WTC11 (cell line): ENCODE measurements at regions of chr11 and their contacts with region 1.

Region 1: DNA sequence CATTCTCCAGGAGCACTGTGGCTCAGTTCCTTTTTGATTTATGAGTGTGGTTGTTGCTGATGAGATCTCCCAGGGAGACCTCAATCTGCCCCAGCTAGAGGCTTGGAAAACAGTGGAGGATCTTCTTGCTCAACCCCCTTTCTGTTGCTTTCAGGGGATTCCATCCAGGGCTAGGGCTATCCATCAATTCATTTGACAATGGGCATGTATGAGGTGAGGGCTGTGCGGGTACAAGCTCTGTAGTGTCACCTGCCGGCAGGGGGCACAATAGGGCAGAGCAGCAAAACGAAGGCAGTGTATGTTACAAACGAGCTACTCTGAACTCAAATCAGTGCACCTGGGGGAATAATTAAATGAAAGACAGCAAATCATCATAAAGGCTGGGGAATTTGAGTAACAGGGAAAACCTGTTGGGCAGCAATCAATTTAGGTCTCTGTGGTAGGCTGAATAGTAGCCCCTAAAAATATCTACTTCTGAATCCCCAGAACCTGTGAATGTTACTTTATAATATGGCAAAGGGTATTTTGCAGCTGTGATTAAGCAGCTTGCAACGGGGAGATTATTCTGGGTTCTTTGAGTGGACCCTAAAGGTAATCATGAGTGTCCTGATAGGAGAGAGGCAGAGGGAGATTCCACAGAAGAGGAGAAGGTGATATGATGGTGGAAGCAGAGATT is 170.3 kb upstream of the ZBED5 start:
- DNase-seq: peak; percentile 86
- ATAC-seq: peak; percentile 99
- H3K4me3 Mint-ChIP-seq: no peak overlapping the region
- H3K27ac Mint-ChIP-seq: no peak overlapping the region
- H3K4me1 Mint-ChIP-seq: 0 out of 2 replicates have a peak, but pooled peaks cover 2% of the 10 kb centered on the region
- H3K27me3 Mint-ChIP-seq: no peaks in the 10 kb centered on the region; the same call in 1 of the 2 replicates
- CTCF ChIP-seq: peak; percentile 75

Region 2: GRCh38 chr11:10933455-10934292 is 94.5 kb before region 1 on chr11:
- CTCF ChIA-PET with region 1: interaction called, 150 read pairs
- POLR2A ChIA-PET with region 1: interaction called, 5 read pairs
- DNase-seq: peak; percentile 94
- ATAC-seq: peak; percentile 78
- H3K4me3 Mint-ChIP-seq: peak overlapping the region; percentile 84
- H3K27ac Mint-ChIP-seq: peak overlapping the region; percentile 73
- H3K4me1 Mint-ChIP-seq: peaks cover 20% of the 10 kb centered on the region
- H3K27me3 Mint-ChIP-seq: peaks cover 20% of the 10 kb centered on the region
- CTCF ChIP-seq: peak; percentile 85

Region 3: GRCh38 chr11:11069841-11070835 is 42.0 kb after region 1 on chr11:
- CTCF ChIA-PET with region 1: interaction called, 27 read pairs
- POLR2A ChIA-PET with region 1: no interaction called
- DNase-seq: no peak
- ATAC-seq: no peak
- H3K4me3 Mint-ChIP-seq: no peak overlapping the region
- H3K27ac Mint-ChIP-seq: no peak overlapping the region
- H3K4me1 Mint-ChIP-seq: peaks cover 79% of the 10 kb centered on the region
- H3K27me3 Mint-ChIP-seq: peaks cover 4% of the 10 kb centered on the region
- CTCF ChIP-seq: no peak

Region 4: DNA sequence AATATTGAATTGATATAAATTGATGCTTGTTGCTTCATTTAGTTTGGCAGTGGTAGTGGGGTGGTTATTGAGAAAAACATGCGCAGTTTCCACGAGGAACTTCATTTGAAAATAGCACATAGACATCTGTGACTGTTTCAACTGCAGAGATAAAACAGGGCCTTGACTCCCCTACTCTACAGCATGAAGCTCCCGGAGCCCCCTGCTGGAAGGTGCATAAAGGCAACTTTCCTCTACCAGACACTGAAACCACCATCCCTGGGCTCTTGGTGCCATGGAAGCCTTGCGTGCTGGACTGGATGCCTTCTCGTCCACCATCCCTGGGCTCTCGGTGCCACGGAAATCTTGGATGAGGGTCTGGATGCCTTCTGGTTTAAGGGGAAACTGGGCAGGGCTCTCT is 129.0 kb after region 1 on chr11:
- CTCF ChIA-PET with region 1: interaction called, 47 read pairs
- POLR2A ChIA-PET with region 1: no interaction called
- DNase-seq: peak; percentile 67
- ATAC-seq: peak; percentile 69
- H3K4me3 Mint-ChIP-seq: no peak overlapping the region
- H3K27ac Mint-ChIP-seq: no peak overlapping the region
- H3K4me1 Mint-ChIP-seq: no peaks in the 10 kb centered on the region
- H3K27me3 Mint-ChIP-seq: peaks cover 7% of the 10 kb centered on the region; the same call in 1 of the 2 replicates
- CTCF ChIP-seq: no peak

Region 5: DNA sequence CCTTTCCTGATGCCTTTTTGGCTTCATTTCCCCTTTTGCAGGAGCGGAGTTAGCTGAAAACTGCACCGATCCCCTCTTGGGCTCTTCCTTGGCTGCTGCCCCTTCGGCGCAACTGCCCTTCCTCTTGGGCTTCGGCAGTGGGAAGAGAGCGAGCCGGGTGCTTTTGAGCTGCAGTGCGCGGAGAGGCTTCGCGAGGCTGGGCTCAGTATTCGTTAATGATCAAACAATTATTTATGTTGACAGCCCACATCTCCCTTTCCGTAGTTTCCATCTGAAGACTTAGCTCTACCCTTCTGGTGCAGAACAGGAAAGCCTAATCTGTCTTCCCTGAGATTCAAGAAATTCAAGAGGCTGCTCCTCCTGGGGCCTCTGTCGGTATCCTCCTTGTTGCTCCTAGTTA is 154.1 kb after region 1 on chr11:
- CTCF ChIA-PET with region 1: interaction called, 12 read pairs
- POLR2A ChIA-PET with region 1: no interaction called
- DNase-seq: no peak
- ATAC-seq: no peak
- H3K4me3 Mint-ChIP-seq: no peak overlapping the region
- H3K27ac Mint-ChIP-seq: no peak overlapping the region
- H3K4me1 Mint-ChIP-seq: peaks cover 2% of the 10 kb centered on the region; the same call in 1 of the 2 replicates
- H3K27me3 Mint-ChIP-seq: peaks cover 6% of the 10 kb centered on the region; the same call in 1 of the 2 replicates
- CTCF ChIP-seq: no peak

Region 6: DNA sequence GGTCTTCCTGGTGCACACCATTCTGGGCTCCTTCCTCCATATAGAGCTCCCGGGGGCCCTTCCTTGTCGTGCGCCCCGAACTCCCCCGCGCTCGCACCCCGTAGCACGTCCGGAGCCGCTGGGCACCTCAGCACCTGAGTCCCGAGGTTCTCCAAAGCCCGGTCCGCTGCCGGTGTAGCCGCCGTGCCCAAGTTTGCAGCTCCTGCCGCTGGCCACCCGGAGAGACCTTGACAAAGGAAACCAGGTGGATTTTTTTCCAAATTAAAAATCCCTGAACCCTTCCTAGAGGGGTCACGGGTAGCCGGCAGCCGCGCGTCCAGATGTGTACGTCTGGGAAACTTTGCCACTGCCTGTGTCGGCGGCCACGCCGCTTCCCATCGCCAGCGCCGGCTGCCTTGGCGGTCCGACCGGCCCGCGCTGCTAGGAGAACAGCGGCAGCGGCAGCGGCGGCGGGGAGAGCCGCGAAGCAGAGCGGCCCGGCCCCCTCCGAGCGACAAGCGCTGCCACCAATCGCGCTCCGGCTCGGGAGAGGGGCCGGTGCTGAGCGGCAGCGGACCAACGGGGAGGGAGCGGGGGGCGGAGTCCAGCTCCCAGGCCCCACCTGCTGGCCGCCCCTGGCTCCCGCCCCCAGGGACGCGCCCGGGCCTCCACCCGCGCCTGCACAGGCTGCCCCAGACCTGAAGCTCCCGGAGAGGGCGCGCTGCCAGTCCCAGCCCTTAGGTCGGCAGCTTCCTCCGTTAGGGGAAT is 593.6 kb after region 1 on chr11 and contains the start of gene GALNT18:
- CTCF ChIA-PET with region 1: interaction called, 14 read pairs
- POLR2A ChIA-PET with region 1: no interaction called
- DNase-seq: peak; percentile 93
- ATAC-seq: peak; percentile 94
- H3K4me3 Mint-ChIP-seq: peak within 1 kb of the TSS; percentile 83
- H3K27ac Mint-ChIP-seq: no peak within 1 kb of the TSS
- H3K4me1 Mint-ChIP-seq: peaks cover 28% of the 10 kb centered on the region
- H3K27me3 Mint-ChIP-seq: peaks cover 76% of the 10 kb centered on the region
- CTCF ChIP-seq: no peak
- total RNA-seq, gene GALNT18: 4.4 to 5.0 TPM (median 5.0 TPM) in 3 replicates